Mucosa of descending colon (tissue), 3 donors: ENCODE measurements at regions of chr7 and their contacts with region 1.

Region 1: DNA sequence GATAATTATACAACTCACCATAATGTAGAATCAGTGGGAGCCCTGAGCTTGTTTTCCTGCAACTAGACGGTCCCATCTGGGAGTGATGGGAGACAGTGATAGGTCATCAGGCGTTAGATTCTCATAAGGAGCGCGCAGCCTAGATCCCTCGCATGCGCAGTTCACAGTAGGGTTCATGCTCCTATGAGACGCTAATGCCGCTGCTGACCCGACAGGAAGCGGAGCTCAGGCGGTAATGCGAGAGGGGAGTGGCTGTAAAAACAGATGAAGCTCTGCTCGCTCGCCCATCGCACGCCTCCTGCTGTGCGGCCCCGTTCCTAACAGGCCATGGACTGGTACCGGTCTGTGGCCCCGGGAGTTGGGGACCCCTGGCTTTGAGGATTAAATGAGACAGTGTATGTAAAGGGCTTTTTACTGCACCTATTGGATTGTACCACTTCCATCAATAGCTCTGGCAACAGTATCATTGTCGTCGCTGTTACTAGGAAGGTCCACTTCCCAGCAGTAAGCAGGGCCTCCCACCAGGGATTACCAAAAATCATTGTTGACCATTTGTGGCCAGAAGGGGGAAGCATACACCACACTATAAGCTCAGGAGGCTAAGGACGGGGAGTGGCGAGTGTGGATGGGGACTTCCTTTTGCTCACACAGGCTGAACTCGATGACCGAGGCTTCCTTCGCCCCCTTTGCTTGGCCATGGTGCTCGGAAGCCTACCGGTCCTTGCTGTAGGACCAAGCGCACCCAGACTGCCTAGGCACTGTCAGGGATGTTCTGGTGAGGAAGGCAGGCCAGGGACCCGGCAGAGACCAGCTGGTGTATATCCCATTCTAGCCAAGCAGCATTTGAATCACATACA is 26.4 kb downstream of the AKR1B1 start:
- DNase-seq: peak; percentile 86 to 90 (median 89)
- ATAC-seq: peak; percentile 92
- H3K4me3 ChIP-seq: no peak overlapping the region
- H3K4me1 ChIP-seq: peaks cover 17% of the 10 kb centered on the region
- CTCF ChIP-seq: peak; percentile 21

Region 2: GRCh38 chr7:134298902-134299683 is 133.4 kb before region 1 on chr7:
- intact Hi-C with region 1: no loop called
- DNase-seq: peak in 2 of 3 donors; percentile 52 to 63
- ATAC-seq: peak; percentile 40
- H3K4me3 ChIP-seq: no peak overlapping the region
- H3K4me1 ChIP-seq: no peaks in the 10 kb centered on the region
- CTCF ChIP-seq: no peak

Region 3: DNA sequence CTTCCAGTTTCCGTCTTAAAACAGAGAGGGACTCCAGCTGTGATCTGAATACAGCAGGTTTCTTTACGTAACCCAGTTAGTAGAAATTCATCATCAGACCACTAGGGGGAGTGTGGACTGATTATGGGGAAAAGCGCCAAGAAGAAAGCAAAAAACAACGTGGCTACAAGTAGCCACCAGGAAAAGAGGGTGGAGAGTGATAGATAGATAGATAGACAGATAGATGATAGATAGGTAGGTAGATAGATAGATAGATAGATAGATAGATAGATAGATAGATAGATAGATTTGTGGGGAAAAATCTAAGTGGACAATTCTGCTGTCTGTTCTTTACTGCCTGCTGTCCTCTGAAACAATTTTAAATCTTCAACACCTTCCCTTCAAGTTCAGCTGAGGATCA is 82.1 kb after region 1 on chr7:
- intact Hi-C with region 1: loop called in 1 of 2 experiments (anchors 5 kb)
- DNase-seq: peak in 1 of 3 donors; percentile 72
- ATAC-seq: peak; percentile 86
- H3K4me3 ChIP-seq: no peak overlapping the region
- H3K4me1 ChIP-seq: no peaks in the 10 kb centered on the region
- CTCF ChIP-seq: peak; percentile 52

Region 4: DNA sequence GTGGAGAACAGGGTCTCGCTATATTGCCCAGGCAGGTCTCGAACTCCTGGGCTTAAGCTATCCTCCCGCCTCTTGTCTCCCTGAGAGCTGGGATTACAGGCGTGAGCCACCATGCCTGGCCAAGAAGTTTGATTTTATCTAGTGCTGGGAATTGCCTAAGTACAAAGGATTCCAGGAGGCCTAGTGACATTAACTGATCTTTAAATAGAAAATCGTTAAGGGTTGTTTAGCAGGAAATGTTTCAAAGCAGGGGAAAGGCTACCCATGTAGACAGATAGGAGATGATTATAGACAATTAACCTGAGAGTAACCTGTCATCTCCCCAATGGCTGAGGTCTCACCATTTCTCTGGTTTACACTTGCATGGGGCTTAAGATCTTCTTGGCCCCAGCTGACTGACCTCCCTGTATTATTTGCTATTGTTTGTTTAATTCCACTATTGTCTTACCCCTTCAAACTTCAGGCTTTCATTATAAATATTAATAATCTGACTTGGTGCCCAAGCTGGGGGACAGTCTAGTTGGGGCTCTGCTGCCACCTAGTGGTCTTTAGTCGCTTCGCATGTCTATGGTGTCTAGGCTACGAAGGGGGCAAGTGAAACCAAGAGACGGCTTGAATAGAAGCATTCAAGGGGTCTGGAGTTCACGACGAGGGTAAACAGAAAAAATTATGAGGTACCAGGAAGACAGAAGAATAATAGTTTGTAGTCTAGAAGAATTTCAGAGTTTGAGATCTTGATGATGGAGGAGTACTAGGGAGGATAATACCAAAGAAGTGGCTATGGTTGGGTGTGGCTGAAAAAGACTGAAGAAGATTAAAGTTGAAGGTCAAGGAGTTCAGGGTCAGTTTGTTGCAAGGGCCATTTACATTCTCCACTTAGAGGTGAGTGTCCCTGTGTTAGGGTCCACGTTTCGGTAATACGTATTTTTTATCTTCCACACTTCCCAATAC is 173.7 kb after region 1 on chr7:
- intact Hi-C with region 1: loop called (anchors 5 to 10 kb)
- DNase-seq: peak in 2 of 3 donors; percentile 48 to 75
- ATAC-seq: peak; percentile 85
- H3K4me3 ChIP-seq: no peak overlapping the region
- H3K4me1 ChIP-seq: no peaks in the 10 kb centered on the region
- CTCF ChIP-seq: peak; percentile 86